ENCODE measurements at regions of chr14 and their contacts with region 1.

Region 1: GRCh38 chr14:98173305-98173704 is 1098.7 kb downstream of the BCL11B start:
- DNase-seq: peak; percentile 67
- H3K4me3 Mint-ChIP-seq: peak overlapping the region; percentile 62
- H3K27ac Mint-ChIP-seq: peak overlapping the region; percentile 98
- H3K4me1 Mint-ChIP-seq: peaks cover 98% of the 10 kb centered on the region
- H3K27me3 Mint-ChIP-seq: no peaks in the 10 kb centered on the region

Region 2: DNA sequence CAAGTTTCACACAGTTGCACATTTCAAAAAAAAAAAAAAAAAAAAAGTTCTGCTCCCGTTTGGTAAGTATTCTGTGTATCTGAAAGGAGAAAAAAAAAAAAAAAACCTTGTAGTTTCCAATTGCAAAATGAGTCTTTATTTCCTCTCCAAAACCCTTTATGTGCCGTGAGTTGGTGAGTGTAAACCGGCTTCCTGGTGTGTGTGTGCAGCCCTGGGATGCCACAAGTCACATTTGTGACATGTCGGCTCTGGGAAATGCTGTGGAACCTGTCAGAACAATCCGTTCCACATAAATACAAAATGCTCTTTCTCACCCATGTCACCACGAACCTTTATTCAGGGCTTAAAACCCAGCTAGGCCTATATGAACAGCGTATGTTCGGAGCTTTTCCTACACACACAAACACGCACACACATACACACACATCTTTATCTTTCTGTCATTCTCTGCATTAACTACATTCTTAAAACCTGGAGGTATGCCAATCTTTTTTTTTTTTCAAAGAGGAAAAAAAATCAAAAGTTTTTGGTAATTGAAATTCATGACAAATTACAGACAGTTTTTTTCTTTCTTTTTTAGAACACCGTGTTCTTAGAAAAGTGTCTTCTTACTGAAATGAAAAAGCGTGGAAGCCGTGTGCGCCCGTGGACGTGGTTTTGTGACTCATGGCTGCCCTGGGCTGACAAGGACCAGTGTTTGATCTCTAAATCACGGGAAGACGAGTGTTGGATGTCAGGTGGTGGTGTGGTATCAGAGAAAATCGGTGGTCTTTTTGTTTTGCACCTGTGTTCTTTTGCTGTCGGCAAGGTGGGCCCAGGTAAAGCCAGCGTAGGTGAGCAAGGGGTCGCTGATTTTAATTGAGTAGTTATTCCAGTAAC is 764.1 kb before region 1 on chr14:
- CTCF ChIA-PET with region 1: no interaction called
- POLR2A ChIA-PET with region 1: interaction called, 4 read pairs
- intact Hi-C with region 1: loop called (anchors 10 kb)
- DNase-seq: peak; percentile 75
- H3K4me3 Mint-ChIP-seq: peak overlapping the region; percentile 49
- H3K27ac Mint-ChIP-seq: peak overlapping the region; percentile 92
- H3K4me1 Mint-ChIP-seq: peaks cover 38% of the 10 kb centered on the region
- H3K27me3 Mint-ChIP-seq: peaks cover 5% of the 10 kb centered on the region

Region 3: GRCh38 chr14:98099527-98099926 is 73.8 kb before region 1 on chr14:
- CTCF ChIA-PET with region 1: no interaction called
- POLR2A ChIA-PET with region 1: no interaction called
- intact Hi-C with region 1: loop called (anchors 2 kb)
- DNase-seq: no peak
- H3K4me3 Mint-ChIP-seq: no peak overlapping the region
- H3K27ac Mint-ChIP-seq: peak overlapping the region; percentile 70
- H3K4me1 Mint-ChIP-seq: peaks cover 33% of the 10 kb centered on the region
- H3K27me3 Mint-ChIP-seq: no peaks in the 10 kb centered on the region

Region 4: GRCh38 chr14:98129753-98130152 is 43.6 kb before region 1 on chr14:
- CTCF ChIA-PET with region 1: no interaction called
- POLR2A ChIA-PET with region 1: no interaction called
- intact Hi-C with region 1: no loop called
- DNase-seq: no peak
- H3K4me3 Mint-ChIP-seq: no peak overlapping the region
- H3K27ac Mint-ChIP-seq: no peak overlapping the region
- H3K4me1 Mint-ChIP-seq: peaks cover 9% of the 10 kb centered on the region
- H3K27me3 Mint-ChIP-seq: no peaks in the 10 kb centered on the region

Region 5: DNA sequence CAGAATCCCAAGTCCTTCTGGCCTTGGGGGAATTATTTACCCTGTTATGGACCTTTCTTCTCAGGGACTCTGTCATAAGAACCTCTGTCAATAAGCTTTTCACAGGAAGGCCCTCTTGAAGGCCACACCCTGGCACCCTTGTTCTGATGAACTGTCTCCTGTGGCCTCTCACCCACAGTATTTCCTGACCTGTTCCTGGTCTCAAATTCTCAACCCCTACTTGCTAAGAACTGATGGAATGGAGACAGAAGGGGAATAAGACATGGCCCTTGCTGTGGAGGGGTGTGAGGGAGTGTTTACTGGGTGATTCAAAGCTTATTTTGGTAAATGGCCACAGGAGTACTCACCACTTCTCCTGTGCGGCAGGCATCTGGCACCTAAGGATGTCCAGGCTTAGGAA is 15.8 kb after region 1 on chr14:
- CTCF ChIA-PET with region 1: interaction called, 7 read pairs
- POLR2A ChIA-PET with region 1: interaction called, 23 read pairs
- intact Hi-C with region 1: loop called (anchors 1 kb)
- DNase-seq: peak; percentile 65
- H3K4me3 Mint-ChIP-seq: peak overlapping the region; percentile 75
- H3K27ac Mint-ChIP-seq: peak overlapping the region; percentile 100
- H3K4me1 Mint-ChIP-seq: peaks cover 94% of the 10 kb centered on the region
- H3K27me3 Mint-ChIP-seq: no peaks in the 10 kb centered on the region

Region 6: DNA sequence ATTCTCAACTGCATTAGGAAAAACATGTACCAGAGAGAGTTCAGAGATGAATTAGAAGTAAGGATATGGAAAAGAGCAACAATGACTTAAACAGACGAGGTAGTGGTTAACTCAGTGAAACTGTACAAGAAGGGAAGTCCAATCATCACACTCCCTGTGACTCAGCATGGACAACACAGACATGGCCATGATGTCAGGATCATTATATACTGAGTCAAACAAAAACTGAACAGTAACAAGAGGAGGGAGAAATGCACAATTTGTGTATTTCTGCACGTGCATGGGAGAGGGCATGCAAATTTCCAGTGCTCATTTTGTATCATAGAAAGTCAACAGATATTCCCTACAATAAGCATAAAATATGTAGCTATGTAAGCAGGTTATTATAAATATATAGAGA is 60.9 kb after region 1 on chr14:
- CTCF ChIA-PET with region 1: interaction called, 4 read pairs
- POLR2A ChIA-PET with region 1: interaction called, 12 read pairs
- intact Hi-C with region 1: loop called (anchors 1 kb)
- DNase-seq: peak; percentile 72
- H3K4me3 Mint-ChIP-seq: no peak overlapping the region
- H3K27ac Mint-ChIP-seq: peak overlapping the region; percentile 36
- H3K4me1 Mint-ChIP-seq: peaks cover 71% of the 10 kb centered on the region
- H3K27me3 Mint-ChIP-seq: no peaks in the 10 kb centered on the region